Calu3 (cell line): ENCODE measurements at regions of chr17 and their contacts with region 1.

Region 1: GRCh38 chr17:4004517-4005295 is 40.5 kb upstream of the ATP2A3 start:
- DNase-seq: peak; percentile 65
- H3K4me3 Mint-ChIP-seq: no peak overlapping the region
- H3K27ac Mint-ChIP-seq: no peak overlapping the region
- H3K4me1 Mint-ChIP-seq: peaks cover 10% of the 10 kb centered on the region
- H3K27me3 Mint-ChIP-seq: no peaks in the 10 kb centered on the region
- CTCF ChIP-seq: peak; percentile 80

Region 2: GRCh38 chr17:3788200-3788599 is 216.5 kb before region 1 on chr17:
- CTCF ChIA-PET with region 1: no interaction called
- intact Hi-C with region 1: no loop called
- DNase-seq: no peak
- H3K4me3 Mint-ChIP-seq: no peak overlapping the region
- H3K27ac Mint-ChIP-seq: no peak overlapping the region
- H3K4me1 Mint-ChIP-seq: no peaks in the 10 kb centered on the region
- H3K27me3 Mint-ChIP-seq: no peaks in the 10 kb centered on the region
- CTCF ChIP-seq: no peak

Region 3: DNA sequence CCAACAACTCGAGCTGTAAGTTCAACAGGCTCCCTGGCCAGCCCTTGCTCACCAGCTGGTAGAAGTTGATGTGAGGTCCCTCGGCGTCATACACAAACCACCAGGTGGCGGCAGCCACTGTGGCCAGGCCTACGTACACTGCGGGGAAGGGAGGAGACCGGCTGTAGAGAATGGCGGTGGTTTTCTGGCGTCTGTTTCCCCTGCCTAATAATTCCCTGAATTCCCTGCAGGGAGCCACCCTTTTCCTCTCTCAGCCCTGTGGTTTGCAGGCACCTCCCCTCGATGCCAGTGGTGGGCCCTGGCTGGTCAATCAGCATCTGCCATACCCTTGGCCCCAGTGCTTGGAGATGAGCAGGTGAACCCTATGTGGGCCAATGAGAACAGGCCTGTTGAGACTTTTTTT is 69.6 kb before region 1 on chr17:
- CTCF ChIA-PET with region 1: no interaction called
- intact Hi-C with region 1: loop called (anchors 2 kb)
- DNase-seq: peak; percentile 73
- H3K4me3 Mint-ChIP-seq: no peak overlapping the region
- H3K27ac Mint-ChIP-seq: no peak overlapping the region
- H3K4me1 Mint-ChIP-seq: no peaks in the 10 kb centered on the region
- H3K27me3 Mint-ChIP-seq: no peaks in the 10 kb centered on the region
- CTCF ChIP-seq: peak; percentile 48

Region 4: DNA sequence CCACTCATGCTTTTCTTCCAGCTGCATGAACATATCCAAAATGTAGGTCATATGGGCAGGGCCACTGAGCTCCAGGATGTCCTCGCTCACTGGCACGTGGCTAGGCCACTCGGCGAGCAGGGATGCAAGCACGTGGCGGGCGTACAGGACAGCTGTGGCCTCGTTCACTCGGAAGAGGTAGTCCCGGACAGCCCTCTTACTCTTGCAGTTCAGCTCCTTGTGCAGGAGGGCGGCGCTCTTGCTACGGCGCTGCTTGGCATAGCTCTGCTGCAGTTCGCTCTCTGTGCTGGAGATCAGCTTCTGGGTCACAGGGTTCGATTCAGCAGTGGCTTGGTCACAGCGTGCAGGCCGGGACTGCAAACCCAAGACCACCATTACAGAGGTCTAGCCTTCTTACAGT is 12.7 kb after region 1 on chr17:
- CTCF ChIA-PET with region 1: no interaction called
- intact Hi-C with region 1: no loop called
- DNase-seq: no peak
- H3K4me3 Mint-ChIP-seq: no peak overlapping the region
- H3K27ac Mint-ChIP-seq: no peak overlapping the region
- H3K4me1 Mint-ChIP-seq: no peaks in the 10 kb centered on the region
- H3K27me3 Mint-ChIP-seq: no peaks in the 10 kb centered on the region
- CTCF ChIP-seq: peak; percentile 41